ENCODE measurements at regions of chr12 and their contacts with region 1.

Region 1: DNA sequence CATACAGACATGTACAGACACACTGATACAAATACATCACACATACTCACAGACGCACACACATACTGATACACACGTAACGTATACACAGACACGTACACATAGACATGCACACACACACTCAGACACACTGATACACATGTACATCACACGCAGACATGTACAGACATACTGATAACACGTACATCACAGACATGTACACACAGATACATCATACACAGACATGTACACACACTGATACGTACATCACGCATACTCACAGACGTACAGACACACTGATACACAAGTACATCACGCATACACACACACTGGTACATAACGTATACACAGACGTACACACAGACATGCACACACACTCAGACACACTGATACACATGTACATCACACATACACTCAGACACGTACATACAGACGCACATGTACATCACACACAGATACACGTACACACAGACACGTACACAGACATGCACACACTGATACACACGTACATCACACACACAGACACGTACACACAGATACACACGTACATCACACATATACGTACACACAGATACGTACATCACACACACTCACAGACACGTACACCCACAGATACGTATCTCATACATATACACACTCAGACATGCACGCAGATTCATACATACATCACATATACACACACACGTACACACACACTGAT is 5.1 kb downstream of the ZNF605 start:
- DNase-seq: no peak

Region 2: DNA sequence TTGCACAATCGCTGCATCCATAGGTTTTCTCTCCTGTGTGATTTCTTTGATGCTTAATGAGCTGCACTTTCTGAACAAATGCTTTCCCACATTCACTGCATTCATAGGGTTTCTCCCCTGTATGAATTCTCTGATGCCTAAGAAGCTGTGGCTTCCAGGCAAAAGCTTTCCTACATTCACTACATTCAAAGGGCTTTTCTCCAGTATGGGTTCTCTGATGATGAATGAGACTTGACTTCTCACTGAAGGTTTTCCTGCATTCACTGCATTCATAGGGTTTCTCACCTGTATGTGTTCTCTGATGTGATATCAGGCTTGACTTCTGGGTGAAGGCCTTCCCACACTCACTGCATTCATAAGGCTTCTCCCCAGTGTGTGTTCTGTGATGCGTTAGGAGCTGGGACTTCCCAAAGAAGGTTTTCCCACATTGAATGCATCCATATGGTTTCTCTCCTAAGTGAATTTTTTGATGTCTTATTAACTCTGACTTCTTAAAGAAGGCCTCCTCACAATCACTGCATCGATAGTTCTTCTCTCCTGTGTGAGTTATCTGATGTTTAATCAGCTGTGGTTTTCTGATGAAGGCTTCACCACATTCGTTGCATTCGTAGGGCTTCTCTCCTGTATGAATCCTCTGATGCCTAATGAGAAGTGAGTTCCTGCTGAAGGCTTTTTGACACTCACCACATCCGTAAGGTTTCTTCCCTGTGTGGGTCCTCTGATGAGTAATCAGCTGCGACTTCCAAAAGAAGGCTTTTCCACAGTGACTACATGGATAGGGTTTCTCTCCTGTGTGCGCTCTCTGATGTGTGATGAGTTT is 25.2 kb before region 1 on chr12:
- intact Hi-C with region 1: loop called in 1 of 2 experiments (anchors 1 kb)
- DNase-seq: no peak

Region 3: GRCh38 chr12:133010657-133011297 is 59.8 kb after region 1 on chr12:
- intact Hi-C with region 1: no loop called
- DNase-seq: no peak

Measured in posterior vena cava (tissue), 2 donors.